ENCODE measurements at regions of chr2 and their contacts with region 1.

Region 1: GRCh38 chr2:232611551-232612218 is 21.7 kb upstream of the EFHD1 start:
- DNase-seq: peak; percentile 68 to 71
- H3K4me3 ChIP-seq: no peak overlapping the region
- H3K27ac ChIP-seq: no peak overlapping the region
- H3K4me1 ChIP-seq: no peaks in the 10 kb centered on the region
- H3K27me3 ChIP-seq: no peaks in the 10 kb centered on the region
- CTCF ChIP-seq: peak; percentile 53 to 80 (median 68)
- POLR2A ChIP-seq: no peak

Region 2: GRCh38 chr2:232668805-232669444 is 57.2 kb after region 1 on chr2:
- intact Hi-C with region 1: loop called (anchors 10 kb)
- DNase-seq: peak; percentile 27 to 46
- H3K4me3 ChIP-seq: no peak overlapping the region
- H3K27ac ChIP-seq: no peak overlapping the region
- H3K4me1 ChIP-seq: no peaks in the 10 kb centered on the region
- H3K27me3 ChIP-seq: no peaks in the 10 kb centered on the region
- CTCF ChIP-seq: peak; percentile 29 to 59 (median 48)
- POLR2A ChIP-seq: no peak

Region 3: GRCh38 chr2:233303252-233303651 is 691.6 kb after region 1 on chr2:
- intact Hi-C with region 1: no loop called
- DNase-seq: no peak
- H3K4me3 ChIP-seq: no peak overlapping the region
- H3K27ac ChIP-seq: no peak overlapping the region
- H3K4me1 ChIP-seq: no peaks in the 10 kb centered on the region
- H3K27me3 ChIP-seq: no peaks in the 10 kb centered on the region
- CTCF ChIP-seq: no peak
- POLR2A ChIP-seq: no peak

Measured in uterus (tissue), 4 donors.